CD14-positive monocyte (primary cell): ENCODE measurements at regions of chr17 and their contacts with region 1.

Region 1: DNA sequence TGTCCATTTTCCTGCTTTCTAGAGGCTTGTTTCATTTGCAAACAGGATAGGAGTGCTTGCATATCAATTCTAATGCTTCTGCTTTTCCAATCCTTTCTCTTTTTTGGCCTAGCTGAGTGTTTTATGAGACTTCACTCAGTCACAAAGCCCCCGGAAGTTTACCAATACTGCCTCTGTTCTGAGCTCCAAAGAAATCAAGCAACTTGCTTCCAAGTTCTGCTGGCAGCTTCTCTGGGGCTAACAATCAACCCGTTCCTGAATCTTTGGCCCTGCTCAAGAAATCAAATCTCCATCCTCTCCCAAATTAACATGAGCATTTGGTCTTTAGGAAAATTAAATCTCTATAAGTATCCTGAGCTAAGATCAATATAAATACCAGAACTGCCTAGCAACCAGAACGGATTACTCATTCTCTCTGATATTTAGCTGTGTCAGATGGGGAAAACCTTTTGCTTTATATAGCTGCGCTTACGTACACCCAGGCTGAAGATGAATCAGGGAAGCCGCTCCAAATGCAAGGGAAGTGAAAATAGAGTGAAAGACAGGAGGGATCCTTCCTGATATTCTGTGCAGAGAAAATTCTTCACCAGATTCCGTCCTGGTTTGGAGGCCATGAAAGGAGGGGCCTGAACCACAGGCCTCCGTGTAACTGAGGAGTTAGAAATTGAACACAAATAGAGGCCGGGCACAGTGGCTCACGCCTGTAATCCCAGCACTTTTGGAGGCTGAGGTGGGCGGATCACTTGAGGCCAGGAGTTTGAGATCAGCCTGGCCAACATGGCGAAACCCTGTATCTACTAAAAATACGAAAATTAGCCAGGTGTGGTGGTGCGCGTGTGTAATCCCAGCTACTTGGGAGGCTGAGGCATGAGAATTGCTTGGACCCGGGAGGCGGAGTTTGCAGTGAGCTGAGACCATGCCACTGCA is 23.3 kb upstream of the GRB2 start:
- DNase-seq: peak; percentile 59 to 93 (median 77)
- H3K4me3 ChIP-seq: no peak overlapping the region
- H3K4me3 Mint-ChIP-seq: no peak overlapping the region
- H3K27ac ChIP-seq: peak overlapping the region in 1 of 2 donors; percentile 24
- H3K27ac Mint-ChIP-seq: peak overlapping the region; percentile 57 to 91 (median 82)
- H3K4me1 ChIP-seq: peaks cover 16 to 24% of the 10 kb centered on the region in 2 donors
- H3K4me1 Mint-ChIP-seq: peaks cover 22% of the 10 kb centered on the region
- H3K27me3 ChIP-seq: no peaks in the 10 kb centered on the region
- H3K27me3 Mint-ChIP-seq: peaks cover 0 to 5% (median 4%) of the 10 kb centered on the region in 3 donors
- CTCF ChIP-seq: no peak

Region 2: DNA sequence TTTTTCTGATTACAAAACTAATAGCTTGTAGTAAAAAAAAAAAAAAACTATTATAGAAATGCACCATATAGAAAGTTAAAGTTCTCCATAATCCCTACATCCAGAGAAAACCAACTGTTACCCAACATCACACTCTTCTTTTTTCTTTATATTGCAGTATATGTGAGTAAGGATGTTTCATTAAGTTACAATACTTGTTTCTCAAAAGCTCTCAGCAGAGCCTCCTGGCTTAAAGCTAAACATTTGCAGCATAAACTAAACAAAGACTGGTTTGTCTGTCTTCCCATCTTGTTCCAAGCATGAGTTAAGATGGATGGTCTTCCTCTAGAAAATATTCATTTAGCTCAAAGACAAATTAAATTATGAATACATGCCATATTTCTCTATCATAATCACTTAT is 48.5 kb before region 1 on chr17:
- intact Hi-C with region 1: no loop called
- DNase-seq: no peak
- H3K4me3 ChIP-seq: no peak overlapping the region
- H3K4me3 Mint-ChIP-seq: no peak overlapping the region
- H3K27ac ChIP-seq: peak overlapping the region in 1 of 2 donors; percentile 3
- H3K27ac Mint-ChIP-seq: peak overlapping the region in 2 of 7 donors; percentile 14 to 57
- H3K4me1 ChIP-seq: peaks cover 2 to 8% of the 10 kb centered on the region in 2 donors
- H3K4me1 Mint-ChIP-seq: peaks cover 25% of the 10 kb centered on the region
- H3K27me3 ChIP-seq: no peaks in the 10 kb centered on the region
- H3K27me3 Mint-ChIP-seq: no peaks in the 10 kb centered on the region
- CTCF ChIP-seq: no peak

Region 3: DNA sequence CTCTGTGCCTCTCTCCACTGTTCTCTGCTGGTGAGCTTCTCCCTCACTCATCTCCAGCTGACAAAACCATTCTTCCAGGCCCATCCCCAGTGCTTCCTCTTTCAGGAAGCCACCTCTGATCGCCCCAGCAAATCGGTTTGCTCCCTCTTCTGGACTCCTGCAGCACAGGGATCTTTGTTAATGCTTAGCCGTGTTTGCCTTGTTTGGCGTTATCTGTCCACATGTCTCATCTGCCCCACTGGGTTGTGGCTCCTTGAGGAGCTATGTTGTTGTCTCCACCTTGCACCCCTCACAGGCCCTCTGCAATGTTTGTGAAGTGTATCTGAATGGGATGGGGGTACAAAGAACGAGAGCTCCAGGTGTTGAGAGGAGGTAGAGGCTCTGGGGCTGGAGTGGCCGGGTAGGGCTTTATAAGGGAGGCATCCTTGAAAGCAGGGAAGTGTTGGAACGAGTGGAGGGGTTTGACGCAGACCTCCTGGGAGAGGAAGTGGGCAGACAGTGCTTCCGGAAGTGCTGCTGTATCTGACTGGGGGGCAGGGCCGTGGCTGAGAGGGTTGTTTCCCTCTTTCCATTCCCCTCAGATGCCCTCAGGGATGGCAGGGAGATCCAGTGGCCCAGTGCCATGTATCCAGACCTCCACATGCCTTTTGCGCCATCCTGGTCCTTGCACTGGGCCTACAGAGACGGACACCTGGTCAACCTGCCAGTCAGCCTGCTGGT is 58.7 kb after region 1 on chr17:
- intact Hi-C with region 1: loop called in 1 of 2 experiments (anchors 5 kb)
- DNase-seq: peak; percentile 58 to 73 (median 71)
- H3K4me3 ChIP-seq: peak overlapping the region; percentile 6 to 68 (median 23)
- H3K4me3 Mint-ChIP-seq: peak overlapping the region; percentile 70 to 91
- H3K27ac ChIP-seq: peak overlapping the region; percentile 33 to 82
- H3K27ac Mint-ChIP-seq: peak overlapping the region; percentile 86 to 93 (median 91)
- H3K4me1 ChIP-seq: peaks cover 28% of the 10 kb centered on the region in 2 donors
- H3K4me1 Mint-ChIP-seq: peaks cover 30% of the 10 kb centered on the region
- H3K27me3 ChIP-seq: no peaks in the 10 kb centered on the region
- H3K27me3 Mint-ChIP-seq: peaks cover 0 to 4% (median 0%) of the 10 kb centered on the region in 3 donors
- CTCF ChIP-seq: peak; percentile 30

Region 4: GRCh38 chr17:75504347-75504964 is 75.7 kb after region 1 on chr17:
- intact Hi-C with region 1: loop called in 1 of 2 experiments (anchors 10 kb)
- DNase-seq: peak; percentile 36 to 54 (median 47)
- H3K4me3 ChIP-seq: no peak overlapping the region
- H3K4me3 Mint-ChIP-seq: no peak overlapping the region
- H3K27ac ChIP-seq: no peak overlapping the region
- H3K27ac Mint-ChIP-seq: no peak overlapping the region
- H3K4me1 ChIP-seq: no peaks in the 10 kb centered on the region
- H3K4me1 Mint-ChIP-seq: peaks cover 6% of the 10 kb centered on the region
- H3K27me3 ChIP-seq: no peaks in the 10 kb centered on the region
- H3K27me3 Mint-ChIP-seq: peaks cover 0 to 2% (median 0%) of the 10 kb centered on the region in 3 donors
- CTCF ChIP-seq: peak; percentile 81

Region 5: DNA sequence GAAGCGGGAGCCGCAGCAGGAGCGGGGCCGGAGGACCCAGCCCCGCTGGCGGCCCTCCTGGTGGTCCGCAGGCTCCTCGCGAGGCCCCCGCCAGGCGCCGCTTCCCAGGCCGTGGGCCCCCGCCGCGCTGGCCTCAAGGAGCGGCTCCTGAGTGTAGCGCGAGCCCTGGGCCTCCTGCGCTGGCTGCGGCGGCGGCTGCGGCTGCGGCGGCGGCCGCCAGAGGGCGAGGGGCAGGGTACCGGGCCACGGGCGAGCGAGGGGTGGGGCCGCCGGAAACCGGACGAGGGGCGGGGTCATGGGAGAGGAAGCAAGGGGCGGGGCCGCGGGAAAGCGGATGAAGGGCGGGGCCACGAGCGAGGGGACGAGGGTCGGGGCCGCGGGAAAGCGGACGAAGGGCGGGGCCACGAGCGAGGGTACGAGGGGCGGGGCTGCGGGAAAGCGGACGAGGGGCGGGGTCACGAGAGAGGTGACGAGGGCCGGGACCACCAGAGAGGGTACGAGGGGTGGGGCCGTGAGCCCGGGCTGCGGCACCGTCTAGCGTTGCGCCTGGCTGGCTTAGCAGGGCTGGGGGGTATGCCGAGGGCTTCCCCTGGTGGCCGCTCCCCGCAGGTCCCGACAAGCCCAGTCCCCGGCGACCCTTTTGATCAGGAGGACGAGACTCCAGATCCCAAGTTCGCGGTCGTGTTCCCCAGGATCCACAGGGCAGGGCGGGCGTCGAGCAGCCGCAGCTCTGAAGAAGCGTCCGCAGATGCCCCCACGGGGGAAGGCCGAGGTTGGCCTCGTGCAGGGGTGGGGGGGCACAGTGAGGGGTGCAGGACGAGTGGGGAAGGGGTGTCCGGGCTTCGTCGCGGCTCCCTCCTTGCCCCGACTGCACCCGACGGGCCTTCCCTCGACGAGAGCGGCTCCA is 160.5 kb after region 1 on chr17:
- intact Hi-C with region 1: loop called in 1 of 2 experiments (anchors 10 kb)
- DNase-seq: peak; percentile 81 to 91 (median 86)
- H3K4me3 ChIP-seq: peak overlapping the region; percentile 65 to 88 (median 80)
- H3K4me3 Mint-ChIP-seq: peak overlapping the region; percentile 83 to 87
- H3K27ac ChIP-seq: peak overlapping the region; percentile 88 to 89
- H3K27ac Mint-ChIP-seq: peak overlapping the region in 6 of 7 donors; percentile 75 to 87 (median 84)
- H3K4me1 ChIP-seq: peaks cover 21 to 30% of the 10 kb centered on the region in 2 donors
- H3K4me1 Mint-ChIP-seq: peaks cover 16% of the 10 kb centered on the region
- H3K27me3 ChIP-seq: no peaks in the 10 kb centered on the region
- H3K27me3 Mint-ChIP-seq: peaks cover 0 to 2% (median 0%) of the 10 kb centered on the region in 3 donors
- CTCF ChIP-seq: peak; percentile 75